Ovary (tissue), 10 donors: ENCODE measurements at regions of chr12 and their contacts with region 1.

Region 1: GRCh38 chr12:6873094-6874014 is at the start of gene SPSB2:
- DNase-seq: peak; percentile 99 to 100 (median 99)
- H3K4me3 ChIP-seq: peak within 1 kb of the TSS; percentile 64
- H3K27ac ChIP-seq: peak within 1 kb of the TSS; percentile 42 to 77
- H3K4me1 ChIP-seq: no peaks in the 10 kb centered on the region
- H3K27me3 ChIP-seq: no peaks in the 10 kb centered on the region
- CTCF ChIP-seq: peak in 1 of 3 donors; percentile 28
- EP300 ChIP-seq: no peak
- POLR2A ChIP-seq: peak; percentile 66
- total RNA-seq, gene SPSB2: 5.8 to 14.7 (median 8.5) TPM

Region 2: DNA sequence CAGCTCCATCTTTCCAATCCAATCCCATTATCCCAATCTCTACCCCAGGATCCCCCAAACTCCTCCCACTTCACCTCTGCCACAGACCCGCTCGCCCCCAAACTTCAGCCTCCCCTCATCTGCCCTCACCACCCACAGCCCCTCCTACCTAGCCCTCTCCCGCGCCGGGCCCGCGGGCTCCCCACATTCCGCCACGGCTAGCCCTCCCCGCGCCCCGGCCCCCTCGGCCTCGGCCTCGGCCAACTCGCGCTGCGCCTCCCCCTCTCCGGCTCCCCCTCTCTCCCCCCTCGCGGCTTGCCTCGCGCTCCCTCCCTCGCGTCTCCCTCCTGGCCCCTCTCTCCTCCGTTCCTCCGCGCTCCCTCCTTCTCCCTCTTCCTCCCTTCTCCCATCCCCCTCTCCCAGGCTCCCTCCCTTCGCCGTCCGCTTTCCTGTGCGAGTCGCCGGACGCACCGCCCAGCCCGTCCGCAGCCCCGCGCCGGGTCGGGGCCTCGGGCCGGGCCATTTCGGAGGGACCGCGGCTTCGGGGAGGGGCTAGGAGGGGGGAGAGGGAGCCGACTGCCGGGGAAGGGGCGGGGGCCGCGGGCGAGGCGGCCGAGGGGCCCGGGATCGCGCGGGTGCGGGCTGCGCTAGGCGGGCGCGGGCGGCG is 54.1 kb after region 1 on chr12 and contains the start of gene ATN1:
- intact Hi-C with region 1: loop called in 1 of 4 experiments (anchors 5 kb)
- DNase-seq: peak; percentile 93 to 96 (median 96)
- H3K4me3 ChIP-seq: peak within 1 kb of the TSS; percentile 74
- H3K27ac ChIP-seq: peak within 1 kb of the TSS; percentile 95 to 99
- H3K4me1 ChIP-seq: peaks cover 23% of the 10 kb centered on the region
- H3K27me3 ChIP-seq: no peaks in the 10 kb centered on the region
- CTCF ChIP-seq: no peak
- EP300 ChIP-seq: no peak
- POLR2A ChIP-seq: peak; percentile 77
- total RNA-seq, gene ATN1: 73.9 to 324 (median 206) TPM

Region 3: GRCh38 chr12:6996040-6996441 is 122.7 kb after region 1 on chr12:
- intact Hi-C with region 1: no loop called
- DNase-seq: no peak
- H3K4me3 ChIP-seq: no peak overlapping the region
- H3K27ac ChIP-seq: no peak overlapping the region
- H3K4me1 ChIP-seq: no peaks in the 10 kb centered on the region
- H3K27me3 ChIP-seq: no peaks in the 10 kb centered on the region
- CTCF ChIP-seq: no peak
- EP300 ChIP-seq: no peak
- POLR2A ChIP-seq: no peak